BJ (cell line): ENCODE measurements at regions of chr2 and their contacts with region 1.

Region 1: GRCh38 chr2:85797921-85798320 is 44.1 kb downstream of the ATOH8 start:
- DNase-seq: no peak
- H3K4me3 ChIP-seq: no peak overlapping the region
- H3K27me3 ChIP-seq: no peaks in the 10 kb centered on the region
- CTCF ChIP-seq: peak; percentile 62

Region 2: GRCh38 chr2:85750587-85751575 is 47.0 kb before region 1 on chr2:
- CTCF ChIA-PET with region 1: interaction called, 245 read pairs
- POLR2A ChIA-PET with region 1: interaction called, 3 read pairs
- DNase-seq: no peak
- H3K4me3 ChIP-seq: no peak overlapping the region
- H3K27me3 ChIP-seq: no peaks in the 10 kb centered on the region
- CTCF ChIP-seq: peak; percentile 90

Region 3: DNA sequence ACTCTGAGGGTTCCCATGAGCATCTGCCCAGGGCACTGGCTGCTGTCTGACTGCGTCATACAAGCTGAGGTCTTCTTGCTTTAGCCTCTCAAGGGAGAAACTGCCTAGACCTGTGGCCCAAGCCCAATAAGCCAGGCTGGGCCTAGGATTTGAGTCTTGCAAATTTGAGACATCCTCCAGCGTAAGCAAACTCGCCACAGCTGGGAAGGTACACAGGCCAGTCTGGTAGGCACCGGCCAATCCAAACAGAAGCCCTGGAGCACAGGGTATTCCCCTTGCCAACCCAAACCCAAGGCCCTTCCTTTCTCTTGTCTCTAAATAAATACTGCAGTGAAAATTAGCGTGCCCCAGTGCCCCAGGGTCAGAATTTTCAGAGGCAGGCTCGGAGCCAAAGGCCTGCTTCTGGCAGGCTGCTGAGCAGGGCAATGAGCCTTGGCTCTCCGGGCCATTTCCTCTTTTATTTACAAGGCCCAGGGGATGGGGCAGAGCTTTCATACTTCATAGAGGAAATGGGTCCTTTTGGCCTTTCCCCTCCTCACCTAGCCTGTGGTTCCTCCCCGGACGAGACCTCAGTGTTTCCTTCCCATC is 274.4 kb after region 1 on chr2:
- CTCF ChIA-PET with region 1: no interaction called
- POLR2A ChIA-PET with region 1: no interaction called
- DNase-seq: no peak
- H3K4me3 ChIP-seq: no peak overlapping the region
- H3K27me3 ChIP-seq: no peaks in the 10 kb centered on the region
- CTCF ChIP-seq: no peak